Mammary epithelial cell (primary cell): ENCODE measurements at regions of chr4 and their contacts with region 1.

Region 1: GRCh38 chr4:16001484-16001858 is 38.5 kb upstream of the FGFBP2 start:
- DNase-seq: peak; percentile 56
- H3K4me3 ChIP-seq: no peak overlapping the region
- H3K27ac ChIP-seq: no peak overlapping the region
- H3K4me1 ChIP-seq: no peaks in the 10 kb centered on the region
- H3K27me3 ChIP-seq: peaks cover 6% of the 10 kb centered on the region
- CTCF ChIP-seq: peak; percentile 80 to 86

Region 2: DNA sequence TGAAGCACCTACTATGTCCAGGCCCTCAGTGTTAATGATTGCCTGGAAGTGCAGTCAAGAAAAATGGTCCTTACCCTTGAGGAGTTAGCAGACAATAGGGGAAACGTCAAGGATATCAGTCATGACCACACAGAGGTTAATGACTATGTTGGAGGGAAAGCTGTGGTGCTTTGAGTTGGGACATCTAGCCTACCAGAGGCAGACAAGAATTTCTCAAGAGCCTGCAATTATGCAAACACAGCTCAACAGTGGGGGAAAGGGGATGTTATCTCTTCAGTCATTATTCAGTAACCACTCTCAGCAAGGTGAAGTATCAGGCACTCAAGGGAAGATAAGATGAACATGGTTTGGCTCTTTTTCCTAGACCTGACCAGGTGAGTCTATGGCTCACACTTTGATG is 56.0 kb before region 1 on chr4:
- CTCF ChIA-PET with region 1: no interaction called
- dilution Hi-C with region 1: no loop called
- in situ Hi-C with region 1: no loop called
- intact Hi-C with region 1: no loop called
- DNase-seq: no peak
- H3K4me3 ChIP-seq: no peak overlapping the region
- H3K27ac ChIP-seq: no peak overlapping the region
- H3K4me1 ChIP-seq: peaks cover 3% of the 10 kb centered on the region
- H3K27me3 ChIP-seq: no peaks in the 10 kb centered on the region
- CTCF ChIP-seq: no peak

Region 3: GRCh38 chr4:15963001-15963451 is 38.4 kb before region 1 on chr4 and contains the start of gene FGFBP2:
- CTCF ChIA-PET with region 1: interaction called, 4 read pairs
- dilution Hi-C with region 1: no loop called
- in situ Hi-C with region 1: no loop called
- intact Hi-C with region 1: loop called (anchors 1 kb)
- DNase-seq: peak; percentile 47
- H3K4me3 ChIP-seq: no peak within 1 kb of the TSS
- H3K27ac ChIP-seq: no peak within 1 kb of the TSS
- H3K4me1 ChIP-seq: no peaks in the 10 kb centered on the region
- H3K27me3 ChIP-seq: no peaks in the 10 kb centered on the region
- CTCF ChIP-seq: peak; percentile 37 to 47
- total RNA-seq, gene FGFBP2: not detected

Region 4: GRCh38 chr4:16067515-16067914 is 66.0 kb after region 1 on chr4:
- CTCF ChIA-PET with region 1: no interaction called
- dilution Hi-C with region 1: no loop called
- in situ Hi-C with region 1: no loop called
- intact Hi-C with region 1: no loop called
- DNase-seq: peak; percentile 68
- H3K4me3 ChIP-seq: no peak overlapping the region
- H3K27ac ChIP-seq: no peak overlapping the region
- H3K4me1 ChIP-seq: peaks cover 20% of the 10 kb centered on the region
- H3K27me3 ChIP-seq: no peaks in the 10 kb centered on the region
- CTCF ChIP-seq: no peak